ENCODE measurements at regions of chr4 and their contacts with region 1.

Region 1: GRCh38 chr4:114250439-114250891 is 271.0 kb upstream of the ARSJ start:
- DNase-seq: no peak
- CTCF ChIP-seq: no peak

Region 2: DNA sequence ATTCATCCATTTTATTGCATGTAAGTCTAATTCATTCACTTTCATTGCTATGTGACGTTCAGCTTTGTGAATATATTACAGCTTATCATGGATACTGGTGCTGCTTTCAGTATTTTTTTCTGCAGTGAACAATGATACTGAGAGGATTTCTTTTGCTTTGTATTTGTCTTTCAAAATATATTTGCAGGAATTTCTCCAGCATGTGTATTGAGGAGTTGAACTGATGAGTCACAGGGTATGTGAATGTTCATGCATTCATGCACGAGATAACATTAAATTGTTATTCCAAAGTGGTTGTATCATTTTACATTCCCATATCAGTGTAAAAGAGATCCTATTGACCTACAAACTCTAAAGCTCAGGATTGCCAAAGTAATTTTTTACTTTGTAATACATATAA is 12.8 kb after region 1 on chr4:
- CTCF ChIA-PET with region 1: interaction called, 15 read pairs
- POLR2A ChIA-PET with region 1: no interaction called
- DNase-seq: no peak
- CTCF ChIP-seq: no peak

Region 3: DNA sequence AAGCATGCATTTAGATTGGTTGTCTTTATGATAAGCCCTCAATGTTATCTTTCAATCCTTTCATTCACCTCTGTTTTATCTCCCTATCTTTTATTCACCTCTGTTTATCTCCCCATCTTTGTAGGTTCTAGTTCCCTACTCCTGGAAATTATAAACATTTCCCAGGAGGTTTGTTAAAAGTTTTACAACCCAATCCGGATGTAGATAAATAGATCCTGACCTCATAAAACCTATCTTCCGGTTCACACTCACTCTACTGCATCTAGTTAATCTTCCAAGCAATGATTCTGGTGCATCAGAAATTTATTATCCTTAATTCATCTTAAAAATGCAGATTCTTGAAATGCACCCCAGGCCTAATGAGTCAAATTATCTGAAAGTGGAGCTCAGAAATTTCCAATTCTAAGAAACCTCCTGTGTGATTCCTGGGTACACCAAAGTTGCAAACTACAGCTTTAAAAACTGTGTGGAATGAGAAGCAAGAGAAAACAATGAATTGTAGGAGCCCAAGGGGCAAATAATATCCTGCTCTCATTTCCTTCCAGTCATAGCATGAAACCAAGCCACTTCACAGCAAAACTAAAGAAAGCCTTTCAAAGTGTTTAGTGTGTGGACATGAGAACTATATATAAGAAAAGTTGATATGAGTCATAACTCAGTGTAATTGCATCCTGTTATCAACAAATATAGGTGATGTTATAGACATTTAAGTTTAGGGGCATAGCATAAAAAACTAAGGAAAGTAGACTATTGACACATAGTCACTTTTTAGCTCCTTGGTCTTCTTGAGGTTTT is 297.1 kb after region 1 on chr4:
- CTCF ChIA-PET with region 1: no interaction called
- POLR2A ChIA-PET with region 1: no interaction called
- DNase-seq: no peak
- CTCF ChIP-seq: no peak

Measured in GM10248 (cell line).